Activated T-helper 1 cell treated with anti-CD3 and anti-CD28 coated beads, Interleukin-12 subunit alpha, Interleukin-12 subunit beta, Interleukin-2, Interleukin-4 antibody, amounts not matched to agents 30 ng/mL and 10 ng/mL and 1 ng/mL, durations not matched to agents 14 hours and 24 hours and 36 hours (primary cell): ENCODE measurements at regions of chr11 and their contacts with region 1.

Region 1: GRCh38 chr11:78188286-78189173 is at the starts of genes KCTD21 and USP35:
- DNase-seq: peak; percentile 93
- H3K4me3 Mint-ChIP-seq: peak within 1 kb of the TSS; percentile 99
- H3K27ac Mint-ChIP-seq: peak within 1 kb of the TSS; percentile 100
- H3K4me1 Mint-ChIP-seq: peaks cover 57% of the 10 kb centered on the region
- H3K27me3 Mint-ChIP-seq: no peaks in the 10 kb centered on the region
- total RNA-seq, gene KCTD21: 10.7 and 12.0 TPM in 2 replicates
- total RNA-seq, gene USP35: 11.8 and 14.0 TPM in 2 replicates

Region 2: DNA sequence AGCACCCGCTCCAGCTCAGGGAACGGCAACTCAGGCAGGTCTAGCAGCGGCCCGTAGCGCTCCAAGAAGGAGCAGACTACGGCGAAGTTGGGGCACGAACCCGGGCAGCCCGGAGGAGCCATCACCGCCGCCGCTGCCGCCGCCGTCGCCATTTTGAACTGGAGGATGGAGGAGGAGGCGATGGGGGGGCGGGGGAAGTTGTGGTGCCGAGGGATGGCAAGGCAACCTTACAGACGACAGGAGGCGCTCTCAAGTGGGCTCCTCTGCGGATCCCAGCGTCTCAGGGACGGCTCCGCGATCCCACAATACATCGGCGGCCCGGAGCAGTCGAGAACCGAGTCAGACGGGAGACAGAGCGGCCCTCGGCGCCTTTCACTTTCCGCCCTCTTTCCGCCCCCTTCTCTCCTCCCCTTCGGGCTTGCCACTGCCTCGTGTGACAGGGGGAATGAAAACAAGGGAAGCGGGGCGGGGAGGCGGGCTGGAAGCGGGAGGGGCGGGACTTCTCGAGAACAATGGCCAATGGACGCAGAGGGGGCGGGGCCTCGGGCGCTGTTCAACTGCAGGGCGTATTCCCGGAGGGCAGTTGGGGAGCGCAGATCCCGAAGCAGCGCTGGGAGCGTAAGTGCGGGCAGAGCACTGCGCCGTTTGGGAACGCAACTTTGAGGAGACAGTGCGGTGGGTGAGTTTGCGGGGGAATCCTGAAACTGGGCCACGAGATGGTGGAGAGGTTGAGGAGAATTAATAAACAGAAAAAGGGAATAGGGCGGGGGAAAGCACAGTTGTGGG is 367.8 kb before region 1 on chr11 and contains the starts of genes AAMDC and RSF1:
- intact Hi-C with region 1: loop called (anchors 1 kb)
- DNase-seq: peak; percentile 95
- H3K4me3 Mint-ChIP-seq: peak within 1 kb of the TSS; percentile 97
- H3K27ac Mint-ChIP-seq: peak within 1 kb of the TSS; percentile 94
- H3K4me1 Mint-ChIP-seq: peaks cover 38% of the 10 kb centered on the region
- H3K27me3 Mint-ChIP-seq: peaks cover 2% of the 10 kb centered on the region
- total RNA-seq, gene AAMDC: 1.5 and 2.4 TPM in 2 replicates
- total RNA-seq, gene RSF1: 47.0 and 49.2 TPM in 2 replicates

Region 3: GRCh38 chr11:78069465-78069864 is 119.1 kb before region 1 on chr11:
- intact Hi-C with region 1: no loop called
- DNase-seq: no peak
- H3K4me3 Mint-ChIP-seq: no peak overlapping the region
- H3K27ac Mint-ChIP-seq: no peak overlapping the region
- H3K4me1 Mint-ChIP-seq: peaks cover 7% of the 10 kb centered on the region
- H3K27me3 Mint-ChIP-seq: no peaks in the 10 kb centered on the region

Region 4: DNA sequence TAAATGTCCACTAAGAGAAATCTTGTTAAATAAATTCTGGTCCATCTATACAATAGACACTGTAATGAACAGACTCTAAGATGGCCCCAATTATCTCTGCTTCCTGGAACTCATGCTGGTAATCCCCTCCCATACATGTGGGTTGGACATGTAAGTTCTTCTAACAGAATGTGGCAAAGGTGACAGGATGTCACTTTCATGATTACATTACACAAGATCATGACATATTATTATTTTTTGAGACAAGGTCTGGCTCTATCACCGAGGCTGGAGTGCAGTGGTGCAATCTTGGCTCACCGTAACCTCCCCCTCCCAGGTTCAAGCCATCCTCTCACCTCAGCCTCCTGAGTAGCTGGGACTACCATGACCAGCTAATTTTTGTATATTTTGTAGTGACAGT is 94.3 kb before region 1 on chr11:
- intact Hi-C with region 1: loop called (anchors 1 kb)
- DNase-seq: peak; percentile 20
- H3K4me3 Mint-ChIP-seq: peak overlapping the region; percentile 11
- H3K27ac Mint-ChIP-seq: peak overlapping the region; percentile 82
- H3K4me1 Mint-ChIP-seq: peaks cover 10% of the 10 kb centered on the region
- H3K27me3 Mint-ChIP-seq: no peaks in the 10 kb centered on the region

Region 5: GRCh38 chr11:78177216-78177615 is 11.3 kb before region 1 on chr11:
- intact Hi-C with region 1: no loop called
- DNase-seq: no peak
- H3K4me3 Mint-ChIP-seq: no peak overlapping the region
- H3K27ac Mint-ChIP-seq: no peak overlapping the region
- H3K4me1 Mint-ChIP-seq: peaks cover 5% of the 10 kb centered on the region
- H3K27me3 Mint-ChIP-seq: no peaks in the 10 kb centered on the region

Region 6: DNA sequence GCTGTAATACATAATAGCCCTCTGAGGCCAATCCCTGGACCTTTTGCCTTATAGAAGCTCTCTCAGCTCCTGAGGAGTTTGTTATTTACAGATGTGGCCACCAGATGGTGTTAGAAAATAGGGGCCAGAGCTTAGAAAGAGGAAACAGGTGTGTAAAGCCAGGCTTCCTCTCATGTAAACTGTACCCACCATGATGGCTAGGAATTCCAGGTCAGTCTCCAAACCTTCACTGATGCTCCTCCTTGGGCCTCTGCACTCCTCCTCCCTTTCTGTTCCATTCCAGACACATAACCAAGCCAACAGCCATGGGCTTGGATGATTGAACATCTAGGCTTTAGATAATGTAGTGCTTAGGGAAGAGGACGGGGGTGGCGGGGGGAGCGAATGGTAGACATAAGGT is 39.9 kb after region 1 on chr11:
- intact Hi-C with region 1: loop called (anchors 1 kb)
- DNase-seq: peak; percentile 21
- H3K4me3 Mint-ChIP-seq: no peak overlapping the region
- H3K27ac Mint-ChIP-seq: no peak overlapping the region
- H3K4me1 Mint-ChIP-seq: peaks cover 75% of the 10 kb centered on the region
- H3K27me3 Mint-ChIP-seq: no peaks in the 10 kb centered on the region

Region 7: DNA sequence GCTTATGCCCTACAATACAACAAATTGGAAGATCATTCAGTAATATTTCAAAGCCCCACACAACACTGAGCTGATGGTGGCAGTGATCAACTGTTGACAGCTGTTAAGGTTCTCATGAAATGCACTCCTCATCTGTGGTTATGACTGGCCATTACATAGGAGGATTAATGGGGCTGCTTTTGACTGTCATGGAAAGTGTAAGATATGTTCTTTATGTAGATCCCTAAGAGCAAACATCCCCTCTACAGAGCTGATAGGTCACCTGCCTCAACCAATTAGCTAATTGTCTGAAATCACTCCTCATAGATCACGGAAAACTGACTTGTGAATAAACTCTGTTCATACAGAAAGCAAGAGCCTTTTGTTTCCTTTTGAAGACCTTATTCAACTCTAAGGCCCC is 151.0 kb after region 1 on chr11:
- intact Hi-C with region 1: loop called (anchors 1 kb)
- DNase-seq: no peak
- H3K4me3 Mint-ChIP-seq: peak overlapping the region; percentile 31
- H3K27ac Mint-ChIP-seq: peak overlapping the region; percentile 94
- H3K4me1 Mint-ChIP-seq: peaks cover 86% of the 10 kb centered on the region
- H3K27me3 Mint-ChIP-seq: no peaks in the 10 kb centered on the region

Region 8: GRCh38 chr11:78564490-78565467 is 376.2 kb after region 1 on chr11:
- intact Hi-C with region 1: loop called (anchors 1 kb)
- DNase-seq: peak; percentile 31
- H3K4me3 Mint-ChIP-seq: no peak overlapping the region
- H3K27ac Mint-ChIP-seq: peak overlapping the region; percentile 81
- H3K4me1 Mint-ChIP-seq: peaks cover 50% of the 10 kb centered on the region
- H3K27me3 Mint-ChIP-seq: no peaks in the 10 kb centered on the region